Lower leg skin (tissue), 4 donors: ENCODE measurements at regions of chr1 and their contacts with region 1.

Region 1: GRCh38 chr1:157154940-157155514 is 16.8 kb upstream of the ETV3 start:
- DNase-seq: no peak
- H3K4me3 ChIP-seq: no peak overlapping the region
- CTCF ChIP-seq: no peak
- POLR2A ChIP-seq: no peak

Region 2: GRCh38 chr1:156948708-156949107 is 206.3 kb before region 1 on chr1:
- intact Hi-C with region 1: no loop called
- DNase-seq: no peak
- H3K4me3 ChIP-seq: no peak overlapping the region
- CTCF ChIP-seq: no peak
- POLR2A ChIP-seq: no peak

Region 3: GRCh38 chr1:157092806-157093205 is 62.2 kb before region 1 on chr1:
- intact Hi-C with region 1: loop called (anchors 1 kb)
- DNase-seq: no peak
- H3K4me3 ChIP-seq: no peak overlapping the region
- CTCF ChIP-seq: no peak
- POLR2A ChIP-seq: no peak